Activated CD8-positive, alpha-beta T cell treated with anti-CD3 and anti-CD28 coated beads for 36 hours (primary cell): ENCODE measurements at regions of chr9 and their contacts with region 1.

Region 1: DNA sequence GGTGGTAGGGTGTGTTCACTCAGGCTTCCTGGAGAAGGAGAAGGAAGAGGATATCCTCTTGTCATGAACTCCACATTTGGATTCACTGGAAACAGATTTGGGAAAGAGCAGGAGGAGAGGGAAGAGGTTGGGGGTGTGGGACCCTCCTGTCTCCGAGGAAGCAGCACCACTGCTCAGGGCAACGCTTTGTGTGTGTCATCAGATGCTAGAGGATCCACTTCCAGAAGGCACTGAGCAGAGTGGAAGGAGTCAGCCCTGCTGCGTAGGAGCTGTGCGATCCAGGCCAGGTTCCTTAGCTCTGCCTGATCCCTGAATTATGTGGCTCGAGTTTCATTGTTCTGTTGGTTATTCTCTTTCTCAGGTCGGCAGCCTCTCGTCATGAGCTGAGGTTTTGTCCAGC is 37.3 kb upstream of the TJP2 start:
- DNase-seq: no peak
- ATAC-seq: no peak
- H3K4me3 Mint-ChIP-seq: no peak overlapping the region
- H3K27ac Mint-ChIP-seq: no peak overlapping the region
- H3K4me1 Mint-ChIP-seq: no peaks in the 10 kb centered on the region
- H3K27me3 Mint-ChIP-seq: no peaks in the 10 kb centered on the region
- CTCF ChIP-seq: no peak

Region 2: GRCh38 chr9:69121828-69122548 is 14.8 kb before region 1 on chr9:
- CTCF ChIA-PET with region 1: no interaction called
- POLR2A ChIA-PET with region 1: no interaction called
- intact Hi-C with region 1: loop called (anchors 2 kb)
- DNase-seq: peak; percentile 52
- ATAC-seq: peak; percentile 79
- H3K4me3 Mint-ChIP-seq: peak overlapping the region; percentile 82
- H3K27ac Mint-ChIP-seq: no peak overlapping the region
- H3K4me1 Mint-ChIP-seq: peaks cover 16% of the 10 kb centered on the region
- H3K27me3 Mint-ChIP-seq: peaks cover 9% of the 10 kb centered on the region
- CTCF ChIP-seq: no peak

Region 3: GRCh38 chr9:69157751-69158466 is 21.1 kb after region 1 on chr9:
- CTCF ChIA-PET with region 1: interaction called, 10 read pairs
- POLR2A ChIA-PET with region 1: no interaction called
- intact Hi-C with region 1: no loop called
- DNase-seq: peak; percentile 41
- ATAC-seq: no peak
- H3K4me3 Mint-ChIP-seq: no peak overlapping the region
- H3K27ac Mint-ChIP-seq: no peak overlapping the region
- H3K4me1 Mint-ChIP-seq: no peaks in the 10 kb centered on the region
- H3K27me3 Mint-ChIP-seq: no peaks in the 10 kb centered on the region
- CTCF ChIP-seq: no peak